ENCODE measurements at regions of chr2 and their contacts with region 1.

Region 1: GRCh38 chr2:74482801-74483674 is at the starts of genes CCDC142 and TTC31:
- DNase-seq: peak; percentile 95 to 96
- H3K4me3 ChIP-seq: peak within 1 kb of the TSS; percentile 76
- H3K4me3 Mint-ChIP-seq: peak within 1 kb of the TSS; percentile 82
- H3K27ac Mint-ChIP-seq: peak within 1 kb of the TSS; percentile 90
- H3K4me1 ChIP-seq: peaks cover 12% of the 10 kb centered on the region
- H3K4me1 Mint-ChIP-seq: peaks cover 25% of the 10 kb centered on the region
- H3K27me3 ChIP-seq: no peaks in the 10 kb centered on the region
- H3K27me3 Mint-ChIP-seq: no peaks in the 10 kb centered on the region
- CTCF ChIP-seq: peak; percentile 89 to 95
- total RNA-seq, gene CCDC142: 39.0 and 47.1 TPM in 2 replicates
- total RNA-seq, gene TTC31: 31.3 and 32.4 TPM in 2 replicates

Region 2: DNA sequence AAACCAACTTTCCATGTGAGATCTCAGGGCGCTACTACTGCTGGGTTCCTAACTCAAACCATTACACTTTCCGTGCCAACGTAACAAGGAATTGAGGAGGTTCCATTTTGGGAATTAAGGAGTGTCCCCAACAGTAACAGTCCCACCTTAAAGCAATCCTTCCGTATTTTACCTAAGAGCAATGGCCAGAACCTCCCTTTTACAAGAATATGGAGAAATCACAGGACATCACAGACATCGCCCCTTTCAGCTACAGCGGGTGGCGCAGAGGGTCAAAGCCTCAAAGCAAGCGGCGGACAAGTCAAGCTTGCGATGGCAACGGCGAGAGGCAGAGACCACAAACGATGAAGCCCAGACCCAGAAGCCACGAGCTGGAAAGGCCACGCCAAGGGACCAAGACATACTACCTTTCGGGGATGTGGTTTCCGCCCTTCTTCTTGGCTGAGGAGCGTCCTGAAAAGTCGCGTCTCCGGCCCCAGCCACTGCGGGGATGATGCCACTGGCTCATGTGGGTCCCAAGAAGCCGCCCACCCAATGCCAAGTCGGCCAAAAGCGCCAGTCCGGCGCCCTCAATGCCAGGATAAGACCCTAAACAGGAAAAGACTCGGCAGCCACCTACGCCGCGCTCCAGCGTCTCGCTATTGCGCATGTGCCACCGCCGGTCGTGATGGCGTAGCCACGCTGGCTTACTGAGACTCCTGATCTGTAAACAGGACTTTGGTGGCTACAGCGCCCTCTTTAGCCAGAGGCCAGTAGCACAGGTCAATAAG is 703.4 kb before region 1 on chr2 and contains the start of gene DUSP11:
- CTCF ChIA-PET with region 1: no interaction called
- POLR2A ChIA-PET with region 1: no interaction called
- intact Hi-C with region 1: no loop called
- DNase-seq: peak; percentile 95
- H3K4me3 ChIP-seq: peak within 1 kb of the TSS; percentile 94
- H3K4me3 Mint-ChIP-seq: peak within 1 kb of the TSS; percentile 93
- H3K27ac Mint-ChIP-seq: peak within 1 kb of the TSS; percentile 89
- H3K4me1 ChIP-seq: peaks cover 5% of the 10 kb centered on the region; the same call in 1 of the 2 replicates
- H3K4me1 Mint-ChIP-seq: peaks cover 6% of the 10 kb centered on the region
- H3K27me3 ChIP-seq: no peaks in the 10 kb centered on the region
- H3K27me3 Mint-ChIP-seq: no peaks in the 10 kb centered on the region
- CTCF ChIP-seq: peak; percentile 88 to 95
- total RNA-seq, gene DUSP11: 23.8 and 24.3 TPM in 2 replicates

Region 3: GRCh38 chr2:74472086-74472944 is 10.7 kb before region 1 on chr2 and contains the start of gene MRPL53:
- CTCF ChIA-PET with region 1: interaction called, 7 read pairs
- POLR2A ChIA-PET with region 1: interaction called, 4 read pairs
- intact Hi-C with region 1: loop called (anchors 1 kb)
- DNase-seq: peak; percentile 97
- H3K4me3 ChIP-seq: peak within 1 kb of the TSS; percentile 65
- H3K4me3 Mint-ChIP-seq: peak within 1 kb of the TSS; percentile 93
- H3K27ac Mint-ChIP-seq: peak within 1 kb of the TSS; percentile 95
- H3K4me1 ChIP-seq: peaks cover 4% of the 10 kb centered on the region; the same call in 1 of the 2 replicates
- H3K4me1 Mint-ChIP-seq: peaks cover 8% of the 10 kb centered on the region
- H3K27me3 ChIP-seq: no peaks in the 10 kb centered on the region
- H3K27me3 Mint-ChIP-seq: no peaks in the 10 kb centered on the region
- CTCF ChIP-seq: no peak
- total RNA-seq, gene MRPL53: 88.4 and 102 TPM in 2 replicates

Region 4: DNA sequence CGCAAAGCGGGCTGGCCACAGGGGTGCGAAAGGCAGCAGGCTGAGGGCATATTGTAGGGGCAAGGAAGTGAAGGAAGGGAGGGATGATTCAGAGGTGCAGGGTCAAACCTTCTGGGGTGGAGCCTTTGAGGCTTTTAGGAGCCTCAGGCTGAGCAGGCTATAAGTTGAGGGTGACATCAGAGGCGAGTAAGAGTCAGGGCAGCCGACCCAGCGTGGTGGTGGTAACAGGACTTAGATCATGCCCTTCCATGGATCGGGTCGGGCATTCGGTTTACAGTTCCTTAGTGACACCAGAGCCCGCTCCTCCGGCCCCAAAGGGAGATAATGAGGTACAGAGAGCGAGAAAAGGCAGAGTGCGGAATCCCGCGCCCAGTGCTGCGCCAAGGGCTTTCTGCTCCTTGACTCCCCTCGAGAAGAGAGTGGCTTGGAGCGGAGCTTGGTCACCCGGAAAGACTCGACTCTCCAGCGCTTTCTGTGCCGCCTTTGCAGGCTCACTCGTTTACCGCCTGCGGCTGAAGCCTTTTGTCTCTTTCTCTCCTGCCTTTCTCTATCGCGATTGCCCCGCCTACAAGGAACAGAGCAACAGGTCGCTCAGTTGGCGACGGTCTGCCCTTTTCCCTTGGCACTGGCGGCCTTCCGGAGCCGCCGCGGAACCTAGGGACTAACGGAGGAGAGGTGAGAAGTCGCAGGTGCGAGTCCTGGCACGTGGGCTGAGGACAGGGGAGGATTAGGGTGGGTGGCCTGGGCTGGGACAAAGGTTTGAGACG is 15.6 kb after region 1 on chr2:
- CTCF ChIA-PET with region 1: interaction called, 8 read pairs
- POLR2A ChIA-PET with region 1: interaction called, 3 read pairs
- intact Hi-C with region 1: loop called (anchors 1 kb)
- DNase-seq: peak in 1 of 2 experiments; percentile 40
- H3K4me3 ChIP-seq: peak overlapping the region; percentile 65
- H3K4me3 Mint-ChIP-seq: peak overlapping the region; percentile 96
- H3K27ac Mint-ChIP-seq: peak overlapping the region; percentile 46
- H3K4me1 ChIP-seq: peaks cover 44% of the 10 kb centered on the region
- H3K4me1 Mint-ChIP-seq: peaks cover 12% of the 10 kb centered on the region
- H3K27me3 ChIP-seq: no peaks in the 10 kb centered on the region
- H3K27me3 Mint-ChIP-seq: no peaks in the 10 kb centered on the region
- CTCF ChIP-seq: no peak

Region 5: GRCh38 chr2:74507145-74507925 is 24.3 kb after region 1 on chr2 and contains the start of gene PCGF1:
- CTCF ChIA-PET with region 1: interaction called, 8 read pairs
- POLR2A ChIA-PET with region 1: interaction called, 3 read pairs
- intact Hi-C with region 1: loop called (anchors 1 kb)
- DNase-seq: peak; percentile 98 to 99
- H3K4me3 ChIP-seq: peak within 1 kb of the TSS; percentile 68
- H3K4me3 Mint-ChIP-seq: peak within 1 kb of the TSS; percentile 91
- H3K27ac Mint-ChIP-seq: peak within 1 kb of the TSS; percentile 99
- H3K4me1 ChIP-seq: peaks cover 26% of the 10 kb centered on the region
- H3K4me1 Mint-ChIP-seq: peaks cover 28% of the 10 kb centered on the region
- H3K27me3 ChIP-seq: no peaks in the 10 kb centered on the region
- H3K27me3 Mint-ChIP-seq: no peaks in the 10 kb centered on the region
- CTCF ChIP-seq: peak; percentile 70 to 89
- total RNA-seq, gene PCGF1: 27.0 and 29.7 TPM in 2 replicates

Region 6: DNA sequence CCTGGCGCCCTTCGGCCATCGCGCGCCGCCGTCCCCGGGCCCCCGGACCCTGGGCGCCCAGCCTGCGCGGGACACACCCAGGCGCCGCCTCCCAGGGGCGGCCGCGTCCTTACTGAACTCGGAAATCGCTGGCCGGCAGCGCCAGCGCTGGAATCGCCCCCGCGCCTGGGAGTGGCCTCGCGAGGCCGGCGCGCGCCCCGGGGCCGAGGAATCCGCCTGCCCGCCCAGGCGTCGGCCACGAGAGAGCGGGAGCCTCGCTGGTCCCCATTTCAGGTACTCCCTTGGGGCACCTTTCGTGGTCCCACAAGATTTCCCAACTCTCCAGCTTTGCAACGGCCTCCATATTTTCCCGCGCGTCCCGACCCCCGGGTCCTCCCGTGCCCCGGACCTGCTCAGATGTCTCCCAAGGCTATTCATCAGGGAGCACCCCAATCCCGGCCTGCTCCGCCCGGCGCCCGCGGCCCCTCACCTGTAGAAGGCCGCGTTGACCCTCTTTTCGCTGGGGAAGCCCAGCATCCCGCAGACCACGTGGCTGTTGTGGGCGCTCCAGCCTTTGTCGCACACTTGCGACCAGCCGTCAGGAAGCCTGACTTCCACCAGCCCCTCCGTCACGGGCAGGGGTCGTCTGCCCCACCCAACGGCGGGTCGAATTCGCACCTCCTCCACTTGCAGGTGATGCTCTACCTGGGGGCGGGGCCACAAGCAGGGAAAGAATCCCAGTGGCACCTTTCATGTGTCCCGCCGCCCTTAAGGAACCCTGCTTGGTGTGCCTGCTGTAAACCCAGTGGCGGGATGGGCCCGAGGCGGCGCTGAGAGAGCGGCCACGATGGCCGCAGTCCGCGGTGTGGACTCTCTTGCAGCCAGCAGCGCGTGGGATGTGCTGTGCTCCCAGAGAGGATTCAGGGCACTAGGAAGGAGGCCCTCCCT is 66.1 kb after region 1 on chr2:
- CTCF ChIA-PET with region 1: no interaction called
- POLR2A ChIA-PET with region 1: no interaction called
- intact Hi-C with region 1: loop called (anchors 2 kb)
- DNase-seq: peak; percentile 88 to 90
- H3K4me3 ChIP-seq: peak overlapping the region; percentile 74
- H3K4me3 Mint-ChIP-seq: peak overlapping the region; percentile 87
- H3K27ac Mint-ChIP-seq: peak overlapping the region; percentile 94
- H3K4me1 ChIP-seq: peaks cover 22% of the 10 kb centered on the region
- H3K4me1 Mint-ChIP-seq: peaks cover 13% of the 10 kb centered on the region
- H3K27me3 ChIP-seq: no peaks in the 10 kb centered on the region
- H3K27me3 Mint-ChIP-seq: no peaks in the 10 kb centered on the region
- CTCF ChIP-seq: no peak

Region 7: DNA sequence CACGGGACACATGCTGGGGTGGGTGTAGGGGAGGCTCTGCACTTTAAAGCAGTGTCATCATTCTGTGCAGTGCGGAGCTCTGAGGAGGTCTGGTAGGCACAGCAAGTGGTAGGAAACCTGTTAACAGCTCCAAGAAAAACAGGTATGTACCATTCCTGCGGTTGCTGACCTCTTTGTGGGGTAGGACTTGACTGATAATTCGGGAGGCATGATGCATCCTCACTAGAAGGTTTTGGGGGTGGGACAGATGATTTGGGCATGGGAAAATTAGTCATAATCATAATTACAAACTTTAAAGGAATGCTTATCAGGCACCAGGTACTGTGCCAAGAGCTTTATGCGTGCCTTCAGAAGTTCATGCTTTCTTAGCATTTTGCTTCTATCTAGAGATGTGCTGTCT is 81.2 kb after region 1 on chr2:
- CTCF ChIA-PET with region 1: no interaction called
- POLR2A ChIA-PET with region 1: no interaction called
- intact Hi-C with region 1: no loop called
- DNase-seq: no peak
- H3K4me3 ChIP-seq: no peak overlapping the region
- H3K4me3 Mint-ChIP-seq: no peak overlapping the region
- H3K27ac Mint-ChIP-seq: no peak overlapping the region
- H3K4me1 ChIP-seq: no peaks in the 10 kb centered on the region
- H3K4me1 Mint-ChIP-seq: peaks cover 6% of the 10 kb centered on the region
- H3K27me3 ChIP-seq: no peaks in the 10 kb centered on the region; the same call in 1 of the 2 replicates
- H3K27me3 Mint-ChIP-seq: peaks cover 24% of the 10 kb centered on the region
- CTCF ChIP-seq: no peak

Region 8: DNA sequence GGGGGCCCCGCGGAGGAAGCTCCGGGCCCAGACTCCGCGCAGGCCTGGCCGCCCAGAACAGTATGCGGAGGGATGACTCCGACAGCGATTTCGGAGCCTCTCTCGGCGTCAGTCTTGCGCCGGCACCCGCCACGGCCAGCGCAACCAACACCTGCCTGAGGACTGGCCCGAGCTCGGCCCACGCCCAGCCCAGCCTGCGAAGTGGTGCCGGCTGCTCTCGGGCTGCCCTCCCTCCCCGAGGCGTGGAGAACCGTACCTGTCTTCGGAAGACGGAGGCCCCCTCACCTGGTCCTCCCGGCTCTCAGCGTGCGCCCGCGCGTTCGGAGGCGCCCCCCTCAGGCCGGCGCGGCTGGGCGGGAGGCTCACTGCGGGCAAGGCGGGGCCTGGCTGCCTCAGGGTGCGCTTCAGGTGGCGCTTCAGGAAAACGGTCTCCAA is 165.0 kb after region 1 on chr2 and contains the start of gene M1AP:
- CTCF ChIA-PET with region 1: no interaction called
- POLR2A ChIA-PET with region 1: no interaction called
- intact Hi-C with region 1: no loop called
- DNase-seq: no peak
- H3K4me3 ChIP-seq: no peak within 1 kb of the TSS
- H3K4me3 Mint-ChIP-seq: no peak within 1 kb of the TSS
- H3K27ac Mint-ChIP-seq: no peak within 1 kb of the TSS
- H3K4me1 ChIP-seq: no peaks in the 10 kb centered on the region
- H3K4me1 Mint-ChIP-seq: no peaks in the 10 kb centered on the region
- H3K27me3 ChIP-seq: no peaks in the 10 kb centered on the region
- H3K27me3 Mint-ChIP-seq: peaks cover 6% of the 10 kb centered on the region
- CTCF ChIP-seq: no peak
- total RNA-seq, gene M1AP: not detected in 2 replicates

Measured in Caco-2 (cell line).